Left cardiac atrium (tissue), 4 donors: ENCODE measurements at regions of chr12 and their contacts with region 1.

Region 1: DNA sequence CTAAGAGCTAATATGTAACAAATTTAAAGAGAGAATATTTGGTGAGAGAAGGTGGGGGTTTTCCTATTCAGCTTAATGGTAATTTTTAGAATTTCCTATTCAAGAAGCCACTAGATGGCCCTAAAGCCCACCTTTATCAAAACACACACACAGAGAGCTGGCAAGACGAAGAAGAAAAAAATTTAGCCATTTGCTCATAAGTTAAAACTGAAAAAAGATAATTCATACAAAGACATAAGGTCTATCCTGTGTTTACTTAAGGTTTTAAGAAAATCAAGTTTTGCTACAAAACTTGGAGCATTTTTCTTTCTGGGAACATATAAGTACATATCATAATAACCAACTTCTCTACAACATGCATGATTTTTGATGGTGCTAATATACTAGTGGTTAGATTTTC is 46.8 kb upstream of the PCED1B start:
- DNase-seq: no peak
- ATAC-seq: peak; percentile 78 to 79

Region 2: DNA sequence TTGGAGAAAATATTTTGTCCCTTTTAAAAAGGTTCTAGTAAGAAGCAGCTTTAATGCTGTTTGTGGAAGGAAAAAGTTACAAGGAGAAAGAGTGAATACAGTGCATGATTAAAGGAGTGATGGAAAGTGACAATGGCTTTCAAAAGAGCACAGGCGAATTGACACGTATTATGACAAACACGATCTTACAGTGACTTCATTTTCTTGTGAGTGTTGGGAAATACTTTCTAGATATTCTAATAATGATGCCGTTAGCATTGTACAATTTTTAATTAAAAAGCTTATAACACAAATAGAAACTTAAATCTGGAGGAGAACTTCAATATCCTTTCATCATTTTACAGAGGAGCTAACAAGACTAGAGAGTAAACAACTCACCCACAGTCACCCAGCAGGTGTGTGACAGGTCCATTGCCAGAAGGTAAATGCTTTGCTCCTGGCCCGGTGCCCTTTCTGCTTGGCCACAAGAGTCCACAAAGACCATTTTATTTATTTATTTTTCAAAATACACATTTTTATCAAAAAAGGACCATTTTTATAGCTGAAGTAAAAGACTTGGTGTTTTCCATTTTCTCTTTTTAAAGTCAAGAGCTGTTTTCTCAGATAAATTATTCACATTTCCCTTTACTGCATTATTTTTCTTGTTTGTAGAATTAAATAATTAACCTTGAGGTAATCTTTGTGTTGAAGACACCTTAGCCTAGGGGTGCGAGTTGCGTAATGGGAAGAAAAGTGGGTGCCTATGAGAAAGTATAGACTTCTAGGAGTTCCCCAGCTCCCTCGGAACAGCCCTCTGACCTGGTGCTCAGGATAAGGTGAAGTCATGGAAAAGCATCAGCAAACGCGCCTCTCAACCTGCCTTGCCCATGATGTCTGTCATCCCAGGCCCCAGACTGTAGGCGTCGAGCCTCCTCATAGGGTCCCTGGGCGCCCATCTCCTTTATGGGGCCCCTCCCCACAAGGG is 73.3 kb after region 1 on chr12:
- intact Hi-C with region 1: no loop called
- DNase-seq: no peak
- ATAC-seq: no peak

Region 3: DNA sequence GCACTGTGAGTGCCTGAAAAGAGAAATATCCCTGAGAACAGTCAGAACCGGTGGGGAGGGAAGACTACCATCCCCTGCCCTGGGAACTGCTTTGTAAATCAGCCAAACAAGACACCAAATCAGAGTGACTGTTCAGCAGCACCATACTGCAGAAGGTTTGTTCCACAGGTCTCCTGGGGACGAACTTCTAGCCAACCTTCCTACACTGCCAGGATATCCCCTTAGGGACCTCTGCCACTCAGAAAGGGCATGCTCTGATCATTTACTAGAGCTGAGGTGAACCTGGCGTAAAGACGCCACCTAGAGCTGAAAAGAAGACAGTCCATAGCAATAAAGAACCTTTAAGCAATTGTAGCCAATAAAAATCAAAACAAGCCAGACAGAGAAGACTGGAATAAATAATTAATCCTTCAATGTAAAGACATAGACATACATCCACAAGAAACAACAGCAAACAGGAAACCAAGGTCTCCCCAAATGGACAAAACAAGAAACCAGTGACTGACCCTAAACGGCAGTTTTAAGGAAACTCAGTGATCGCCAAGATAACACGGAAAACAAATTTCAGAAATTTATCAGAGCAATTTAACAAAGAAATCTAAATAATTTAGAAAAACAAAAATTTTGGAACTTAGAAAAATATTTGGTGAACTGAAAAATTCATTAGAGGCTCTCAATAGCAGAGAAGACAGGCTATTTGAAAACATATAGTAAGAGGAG is 275.2 kb after region 1 on chr12:
- intact Hi-C with region 1: loop called in 1 of 2 experiments (anchors 5 kb)
- DNase-seq: no peak
- ATAC-seq: peak; percentile 89 to 91

Region 4: DNA sequence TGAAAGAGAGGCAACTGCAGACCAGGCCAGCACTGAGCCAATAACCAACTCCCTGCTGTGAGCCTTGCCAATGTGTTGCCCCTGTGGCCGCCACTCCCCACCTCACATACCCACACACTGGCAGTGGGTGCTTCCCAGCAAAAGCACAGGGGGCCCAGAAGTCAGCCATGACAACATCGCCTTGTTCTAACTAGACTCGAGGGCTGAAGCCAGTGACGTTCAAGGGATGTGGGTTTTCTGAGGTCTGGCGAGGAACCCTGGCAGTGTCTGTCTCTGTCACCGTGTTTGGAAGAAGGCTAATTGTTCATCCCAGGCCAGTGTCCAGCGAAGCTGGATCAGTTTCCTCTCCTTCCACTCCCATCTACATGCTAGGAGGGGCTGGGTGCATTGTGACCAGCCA is 358.9 kb after region 1 on chr12:
- intact Hi-C with region 1: loop called in 1 of 2 experiments (anchors 5 kb)
- DNase-seq: no peak
- ATAC-seq: peak in 1 of 2 donors; percentile 30

Region 5: DNA sequence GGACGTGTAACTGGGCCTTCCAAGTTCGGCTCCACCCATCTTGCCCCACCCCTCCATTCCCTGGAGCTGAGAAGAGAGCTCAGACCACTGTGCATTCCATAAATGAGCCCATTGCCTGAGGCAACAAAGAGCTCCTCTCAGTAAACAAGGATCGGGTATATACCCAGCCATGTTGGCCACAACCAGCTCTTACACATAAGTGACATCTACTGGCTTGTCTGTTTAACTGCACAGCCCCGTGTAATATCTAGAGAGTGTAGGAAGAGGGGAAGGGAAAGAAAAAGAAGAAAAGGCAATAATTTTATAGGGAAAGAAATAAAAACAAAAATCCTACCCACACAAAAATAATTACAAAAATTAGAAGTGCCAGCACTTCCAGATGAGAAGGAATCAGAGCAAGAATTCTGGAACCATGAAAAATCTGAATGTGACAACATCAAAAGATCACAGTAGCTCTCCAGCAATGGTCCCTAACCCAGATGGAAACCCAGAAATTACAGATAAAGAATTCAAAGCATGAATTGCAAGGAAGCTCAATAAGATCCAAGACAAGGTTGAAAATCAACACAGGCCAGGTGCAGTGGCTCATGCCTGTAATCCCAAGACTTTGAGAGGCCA is 365.1 kb after region 1 on chr12:
- intact Hi-C with region 1: loop called (anchors 1 to 5 kb)
- DNase-seq: no peak
- ATAC-seq: peak; percentile 68 to 78

Region 6: GRCh38 chr12:47651368-47652254 is 619.0 kb after region 1 on chr12:
- intact Hi-C with region 1: loop called in 1 of 2 experiments (anchors 10 kb)
- DNase-seq: peak; percentile 58
- ATAC-seq: peak; percentile 81 to 91

Region 7: DNA sequence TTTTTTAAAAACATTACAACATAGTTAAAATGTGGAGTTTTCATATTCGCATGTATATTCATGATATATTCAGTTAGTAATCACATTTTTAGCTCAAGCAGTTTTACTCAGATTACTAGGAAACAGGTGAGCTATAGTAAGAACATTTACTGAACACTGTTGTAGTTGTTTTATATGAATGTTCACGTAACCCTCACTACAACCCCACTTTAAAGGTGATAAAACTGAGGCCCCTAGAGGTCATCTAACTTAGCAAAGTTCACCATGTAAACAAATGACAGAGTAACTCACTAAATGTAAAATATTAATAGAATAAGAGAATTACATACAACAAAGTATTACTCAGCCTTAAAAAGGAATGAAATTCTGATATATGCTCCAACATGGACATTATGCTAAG is 647.1 kb after region 1 on chr12:
- intact Hi-C with region 1: loop called in 1 of 2 experiments (anchors 5 kb)
- DNase-seq: no peak
- ATAC-seq: no peak